ENCODE measurements at regions of chrX and their contacts with region 1.

Region 1: DNA sequence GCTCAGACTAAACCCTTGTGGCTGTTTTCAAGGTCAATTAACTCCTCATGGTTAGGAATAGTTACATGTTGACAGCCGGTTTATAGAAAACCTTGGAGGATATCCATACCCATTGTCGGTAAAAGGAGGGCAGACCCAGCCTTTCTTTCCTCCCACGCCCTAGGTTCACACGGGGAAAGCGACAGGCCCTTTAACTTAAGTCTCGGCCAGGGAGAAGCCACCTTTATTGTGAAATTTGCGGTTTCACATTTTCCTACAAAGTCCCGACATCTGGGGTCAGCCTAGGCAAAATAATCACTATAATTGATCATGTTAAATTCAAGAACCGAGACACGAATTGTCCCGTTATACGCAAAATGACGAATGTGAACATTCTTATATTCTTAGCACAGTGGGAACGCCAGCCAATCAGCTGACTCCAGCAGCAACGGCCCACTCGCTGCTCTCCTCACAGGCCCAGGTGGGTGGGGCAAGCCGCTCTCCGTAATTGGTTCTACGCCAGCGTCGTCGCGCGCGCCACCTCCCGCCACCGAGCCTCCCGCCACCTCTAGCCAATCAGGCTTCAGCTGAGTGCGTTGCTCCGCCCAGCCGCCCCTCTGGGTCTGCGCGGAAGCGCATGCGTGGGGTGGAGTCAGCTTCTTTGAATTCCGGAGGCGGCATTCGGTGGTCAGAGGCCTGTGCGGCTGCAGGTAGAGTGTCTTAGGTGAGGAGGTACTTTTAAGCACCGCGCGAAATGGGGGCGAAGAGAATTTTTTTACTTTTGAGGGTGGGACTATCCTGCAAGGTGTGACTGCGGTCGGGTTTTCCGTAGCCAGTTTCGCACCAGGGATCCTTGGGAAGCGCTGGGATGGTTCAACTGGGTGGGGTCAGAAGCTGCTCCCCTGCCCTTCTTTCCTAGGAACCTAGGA is at the start of gene CENPI:
- H3K4me3 Mint-ChIP-seq: peak within 1 kb of the TSS; percentile 95
- H3K27ac Mint-ChIP-seq: peak within 1 kb of the TSS; percentile 86
- H3K4me1 Mint-ChIP-seq: peaks cover 18% of the 10 kb centered on the region
- H3K27me3 Mint-ChIP-seq: no peaks in the 10 kb centered on the region

Region 2: GRCh38 chrX:101051549-101052302 is 46.1 kb before region 1 on chrX and contains the start of gene TRMT2B:
- intact Hi-C with region 1: loop called (anchors 1 kb)
- H3K4me3 Mint-ChIP-seq: peak within 1 kb of the TSS; percentile 83
- H3K27ac Mint-ChIP-seq: peak within 1 kb of the TSS; percentile 98
- H3K4me1 Mint-ChIP-seq: peaks cover 18% of the 10 kb centered on the region
- H3K27me3 Mint-ChIP-seq: no peaks in the 10 kb centered on the region